ENCODE measurements at regions of chr13 and their contacts with region 1.

Region 1: DNA sequence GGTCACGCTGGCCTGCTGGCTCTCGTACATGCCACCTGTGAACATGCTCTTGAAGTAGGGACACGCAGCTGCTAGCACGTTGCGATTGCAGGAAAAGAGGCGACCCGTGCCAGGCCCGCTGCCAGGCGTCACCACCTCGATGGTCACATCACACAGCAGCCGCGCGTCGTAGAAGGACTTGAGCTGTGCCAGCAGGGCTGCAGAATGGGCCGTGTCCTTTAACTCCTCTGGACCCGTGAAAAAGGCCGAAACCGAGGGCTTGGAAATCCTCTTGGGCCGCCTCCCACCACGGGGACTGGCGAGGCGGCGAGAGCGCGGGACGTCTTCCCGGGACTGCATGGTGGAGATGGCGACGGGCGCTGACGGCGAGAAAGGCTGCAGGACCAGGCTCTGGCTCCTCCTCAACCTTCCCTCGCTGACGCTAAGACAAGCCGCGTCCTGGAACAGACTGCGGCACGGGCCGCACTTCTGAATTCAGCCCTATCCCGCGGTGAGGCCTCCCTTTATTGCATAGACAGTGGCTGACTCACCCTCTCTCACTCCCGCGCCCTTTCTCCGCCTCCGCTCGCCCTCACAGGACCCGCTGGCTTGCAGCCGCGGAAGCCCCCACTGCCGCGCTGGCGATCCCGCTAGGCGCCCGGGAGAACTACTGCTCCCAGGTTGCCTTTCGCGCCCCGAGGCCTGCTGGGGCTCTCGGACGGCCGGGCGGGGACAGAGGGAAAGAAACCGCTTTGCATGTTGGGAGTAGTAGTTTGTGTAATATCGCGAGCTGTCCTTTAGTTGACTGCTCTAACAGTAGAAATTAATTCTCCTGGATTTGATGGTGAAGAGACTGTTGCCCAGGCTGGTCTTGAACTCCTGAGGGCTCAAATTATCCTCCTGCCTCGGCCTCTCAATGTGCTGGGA is at the start of gene KBTBD7:
- DNase-seq: peak; percentile 94
- H3K4me3 ChIP-seq: peak within 1 kb of the TSS; percentile 54 to 85 (median 74)
- H3K27ac ChIP-seq: peak within 1 kb of the TSS; percentile 86 to 92 (median 88)
- H3K4me1 ChIP-seq: peaks cover 7 to 22% (median 10%) of the 10 kb centered on the region in 4 donors
- H3K27me3 ChIP-seq: no peaks in the 10 kb centered on the region
- CTCF ChIP-seq: no peak
- EP300 ChIP-seq: no peak
- POLR2A ChIP-seq: peak; percentile 65
- total RNA-seq, gene KBTBD7: 0.75 to 7.6 (median 4.2) TPM

Region 2: DNA sequence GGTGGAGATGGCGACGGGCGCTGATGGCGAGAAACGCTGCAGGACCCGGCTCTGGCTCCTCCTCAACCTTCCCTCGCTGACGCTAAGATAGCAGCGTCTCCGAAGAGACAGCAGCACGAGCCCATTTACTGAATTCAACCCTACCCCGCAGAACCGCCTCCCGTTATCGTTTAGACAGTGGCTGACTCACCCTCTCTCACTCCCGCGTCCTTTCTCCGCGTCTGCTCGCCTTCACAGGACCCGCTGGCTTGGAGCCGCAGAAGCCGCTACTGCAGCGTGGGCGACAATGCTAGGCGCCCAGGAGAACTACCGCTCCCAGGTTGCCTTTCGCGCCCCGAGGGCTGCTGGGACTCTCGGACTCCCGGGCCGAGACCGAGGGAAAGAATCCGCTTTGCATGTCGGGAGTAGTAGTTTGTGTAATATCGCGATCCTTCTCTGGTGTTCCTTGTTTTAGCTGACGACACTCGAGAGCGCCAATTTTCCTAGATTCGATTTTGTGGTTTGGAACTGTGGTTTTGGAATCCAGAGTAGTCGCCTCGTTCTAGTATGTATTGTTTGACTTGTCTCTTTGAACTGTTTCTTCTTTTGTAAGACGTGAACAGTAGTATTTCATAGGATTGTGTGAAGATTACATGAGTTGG is 61.5 kb before region 1 on chr13 and contains the start of gene KBTBD6:
- in situ Hi-C with region 1: loop called in 2 of 4 experiments (anchors 10 kb)
- intact Hi-C with region 1: loop called (anchors 2 kb)
- DNase-seq: peak; percentile 96
- H3K4me3 ChIP-seq: peak within 1 kb of the TSS; percentile 65 to 74 (median 68)
- H3K27ac ChIP-seq: peak within 1 kb of the TSS; percentile 78 to 93 (median 90)
- H3K4me1 ChIP-seq: peaks cover 7 to 42% (median 30%) of the 10 kb centered on the region in 4 donors
- H3K27me3 ChIP-seq: no peaks in the 10 kb centered on the region
- CTCF ChIP-seq: no peak
- EP300 ChIP-seq: no peak
- POLR2A ChIP-seq: peak; percentile 54
- total RNA-seq, gene KBTBD6: 0.37 to 4.9 (median 2.1) TPM

Region 3: DNA sequence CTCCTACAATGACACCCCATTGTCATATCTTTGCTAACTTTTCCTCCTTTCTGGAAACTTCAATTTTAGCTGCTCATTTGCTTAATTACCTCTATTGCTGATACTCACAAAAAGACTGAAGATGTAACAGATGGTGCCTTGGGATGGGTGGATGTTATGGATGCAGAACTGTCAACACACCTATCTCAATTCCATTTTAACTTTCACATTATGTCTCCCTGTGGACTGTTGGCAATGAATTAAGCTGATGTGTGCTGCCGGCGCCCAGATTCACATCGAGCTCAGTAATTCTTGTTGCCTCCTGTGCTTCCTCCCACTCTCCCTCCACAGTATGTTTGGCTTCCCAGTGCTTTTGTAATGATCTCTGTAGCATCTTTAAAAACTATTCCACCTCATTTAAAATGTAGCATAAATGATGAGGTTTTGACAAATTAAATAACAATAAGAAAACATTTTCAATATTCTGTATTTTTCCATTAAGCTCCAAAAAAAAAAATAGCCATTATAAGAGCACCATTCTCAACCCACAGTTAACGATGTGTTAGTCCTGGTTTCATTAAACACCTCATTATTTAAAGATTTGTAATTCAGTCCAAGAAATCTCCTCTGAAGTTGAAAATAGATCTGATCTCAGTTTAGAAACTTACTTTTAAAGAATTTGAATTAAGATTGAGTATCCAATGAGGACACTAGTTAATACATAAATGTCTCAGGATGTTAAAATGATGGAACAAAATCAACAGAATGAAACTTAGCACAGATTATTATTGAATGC is 1487.3 kb after region 1 on chr13:
- in situ Hi-C with region 1: no loop called
- intact Hi-C with region 1: no loop called
- DNase-seq: no peak
- H3K4me3 ChIP-seq: no peak overlapping the region
- H3K27ac ChIP-seq: no peak overlapping the region
- H3K4me1 ChIP-seq: no peaks in the 10 kb centered on the region
- H3K27me3 ChIP-seq: no peaks in the 10 kb centered on the region
- CTCF ChIP-seq: no peak
- EP300 ChIP-seq: no peak
- POLR2A ChIP-seq: no peak